Heart left ventricle (tissue), 16 donors: ENCODE measurements at regions of chr6 and their contacts with region 1.

Region 1: GRCh38 chr6:144411332-144412190 is 126.4 kb downstream of the UTRN start:
- DNase-seq: no peak
- ATAC-seq: no peak
- H3K4me3 ChIP-seq: no peak overlapping the region
- H3K27ac ChIP-seq: no peak overlapping the region
- H3K4me1 ChIP-seq: peaks cover 0 to 57% (median 41%) of the 10 kb centered on the region in 12 donors
- H3K27me3 ChIP-seq: no peaks in the 10 kb centered on the region
- CTCF ChIP-seq: no peak
- POLR2A ChIP-seq: no peak

Region 2: GRCh38 chr6:144294016-144294415 is 117.5 kb before region 1 on chr6:
- intact Hi-C with region 1: loop called in 3 of 10 experiments (anchors 10 kb)
- DNase-seq: no peak
- ATAC-seq: peak in 1 of 4 donors; percentile 48
- H3K4me3 ChIP-seq: no peak overlapping the region
- H3K27ac ChIP-seq: peak overlapping the region in 1 of 12 donors; percentile 20
- H3K4me1 ChIP-seq: peaks cover 4 to 72% (median 32%) of the 10 kb centered on the region in 12 donors
- H3K27me3 ChIP-seq: no peaks in the 10 kb centered on the region
- CTCF ChIP-seq: no peak
- POLR2A ChIP-seq: no peak

Region 3: GRCh38 chr6:144349690-144350527 is 61.7 kb before region 1 on chr6:
- intact Hi-C with region 1: loop called in 1 of 10 experiments (anchors 10 kb)
- DNase-seq: peak in 2 of 5 donors; percentile 38 to 52
- ATAC-seq: peak; percentile 64 to 89 (median 72)
- H3K4me3 ChIP-seq: peak overlapping the region in 8 of 12 donors; percentile 1 to 33 (median 10)
- H3K27ac ChIP-seq: peak overlapping the region in 11 of 12 donors; percentile 35 to 82 (median 67)
- H3K4me1 ChIP-seq: peaks cover 18 to 98% (median 71%) of the 10 kb centered on the region in 12 donors
- H3K27me3 ChIP-seq: no peaks in the 10 kb centered on the region
- CTCF ChIP-seq: no peak
- POLR2A ChIP-seq: no peak

Region 4: DNA sequence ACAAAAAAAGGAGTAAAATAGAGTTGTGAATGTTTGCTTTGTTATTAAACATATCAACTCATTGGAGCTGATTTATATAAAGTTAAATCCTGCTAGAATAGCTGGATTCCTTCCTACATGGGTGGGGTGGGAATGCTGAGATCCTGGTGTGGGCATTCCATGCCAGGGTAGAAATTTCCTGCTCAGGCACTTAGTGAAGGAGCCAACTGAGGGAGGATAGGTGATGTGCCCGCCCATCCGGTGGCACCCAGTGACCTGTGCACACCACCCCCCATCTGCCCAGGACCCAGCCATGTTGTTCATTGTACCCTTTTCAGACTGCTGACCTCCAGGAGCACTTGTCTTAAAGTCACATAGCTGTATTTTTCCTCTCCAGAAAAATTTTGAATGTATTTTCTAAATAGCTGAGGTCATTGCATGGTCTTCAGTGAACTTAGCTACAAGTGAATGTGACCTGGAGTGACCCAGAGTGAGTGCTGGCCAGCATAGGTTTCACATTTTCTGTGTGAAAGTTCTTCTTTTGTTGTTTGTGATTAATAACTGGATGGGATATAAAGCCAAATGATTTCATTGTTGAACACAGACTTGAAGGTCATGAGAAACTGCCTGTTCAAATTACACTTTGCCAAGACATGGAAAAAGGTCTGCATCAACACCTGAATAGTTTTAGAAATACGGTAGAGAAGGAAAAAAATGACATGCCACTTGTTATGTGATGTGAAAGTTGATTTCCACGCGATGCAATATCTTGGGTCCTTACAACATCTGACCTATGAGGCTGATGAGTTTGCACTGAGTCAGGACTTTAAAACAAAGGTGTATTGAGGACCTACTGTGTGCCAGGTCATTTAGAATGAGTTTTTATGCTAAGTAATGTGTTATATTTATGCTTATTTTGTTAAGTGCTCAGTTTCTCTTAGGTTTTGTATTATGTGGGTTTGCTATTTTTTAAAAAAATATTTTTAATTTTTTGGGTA is 49.2 kb before region 1 on chr6:
- intact Hi-C with region 1: loop called in 2 of 10 experiments (anchors 10 kb)
- DNase-seq: peak in 2 of 5 donors; percentile 21 to 42
- ATAC-seq: peak; percentile 23 to 78 (median 69)
- H3K4me3 ChIP-seq: no peak overlapping the region
- H3K27ac ChIP-seq: peak overlapping the region in 10 of 12 donors; percentile 0 to 63 (median 41)
- H3K4me1 ChIP-seq: peaks cover 0 to 81% (median 43%) of the 10 kb centered on the region in 12 donors
- H3K27me3 ChIP-seq: no peaks in the 10 kb centered on the region
- CTCF ChIP-seq: no peak
- POLR2A ChIP-seq: no peak

Region 5: GRCh38 chr6:145643760-145644159 is 1232.2 kb after region 1 on chr6:
- intact Hi-C with region 1: no loop called
- DNase-seq: no peak
- ATAC-seq: no peak
- H3K4me3 ChIP-seq: no peak overlapping the region
- H3K27ac ChIP-seq: no peak overlapping the region
- H3K4me1 ChIP-seq: no peaks in the 10 kb centered on the region
- H3K27me3 ChIP-seq: no peaks in the 10 kb centered on the region
- CTCF ChIP-seq: no peak
- POLR2A ChIP-seq: no peak